Mammary epithelial cell (primary cell): ENCODE measurements at regions of chr10 and their contacts with region 1.

Region 1: DNA sequence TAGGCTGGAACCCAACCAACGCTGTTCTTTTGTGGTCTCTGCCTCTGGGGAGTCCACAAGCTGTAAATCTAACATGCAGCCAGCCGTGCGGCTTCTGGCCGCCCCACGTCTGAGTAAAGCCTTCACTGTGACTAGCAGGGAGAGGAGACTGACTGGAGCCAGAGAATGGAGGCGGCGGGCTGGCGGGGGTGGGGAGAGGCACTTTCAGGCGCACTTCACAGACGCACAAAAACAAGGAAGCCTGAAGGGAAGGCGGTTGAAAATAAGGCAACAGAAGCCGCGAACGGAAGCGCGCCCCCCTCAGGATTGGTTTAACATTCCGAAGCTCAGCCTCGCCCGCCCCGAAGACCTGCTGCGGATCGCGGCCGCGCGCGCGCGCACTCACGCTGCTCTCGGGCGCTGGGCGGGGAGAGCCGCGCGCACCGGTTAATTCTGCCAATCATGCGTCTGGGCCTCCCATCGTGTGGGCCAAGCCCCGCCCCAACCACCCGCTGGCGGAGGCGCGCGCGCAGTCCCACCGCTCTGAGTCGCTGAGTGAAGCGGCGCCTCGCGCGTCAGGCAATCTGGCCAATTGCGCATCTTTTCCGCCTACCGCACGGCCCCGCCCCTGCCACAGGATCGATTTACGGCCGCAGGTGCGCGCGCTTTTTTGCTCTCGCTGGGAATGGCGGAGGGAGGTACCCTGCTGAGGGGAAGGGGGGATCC is at the start of gene SFR1:
- DNase-seq: peak; percentile 99
- H3K4me3 ChIP-seq: peak within 1 kb of the TSS; percentile 73 to 78 (median 78)
- H3K27ac ChIP-seq: peak within 1 kb of the TSS; percentile 100
- H3K4me1 ChIP-seq: peaks cover 39% of the 10 kb centered on the region
- H3K27me3 ChIP-seq: no peaks in the 10 kb centered on the region
- CTCF ChIP-seq: peak; percentile 42 to 65
- total RNA-seq, gene SFR1: 5.8 to 16.4 TPM

Region 2: GRCh38 chr10:103966671-103967447 is 154.8 kb before region 1 on chr10 and contains the start of gene SLK:
- CTCF ChIA-PET with region 1: no interaction called
- dilution Hi-C with region 1: no loop called
- in situ Hi-C with region 1: no loop called
- intact Hi-C with region 1: loop called (anchors 5 kb)
- DNase-seq: peak; percentile 80
- H3K4me3 ChIP-seq: peak within 1 kb of the TSS; percentile 69 to 99 (median 97)
- H3K27ac ChIP-seq: peak within 1 kb of the TSS; percentile 72
- H3K4me1 ChIP-seq: peaks cover 13% of the 10 kb centered on the region
- H3K27me3 ChIP-seq: no peaks in the 10 kb centered on the region
- CTCF ChIP-seq: no peak
- total RNA-seq, gene SLK: 79.5 to 85.0 TPM

Region 3: DNA sequence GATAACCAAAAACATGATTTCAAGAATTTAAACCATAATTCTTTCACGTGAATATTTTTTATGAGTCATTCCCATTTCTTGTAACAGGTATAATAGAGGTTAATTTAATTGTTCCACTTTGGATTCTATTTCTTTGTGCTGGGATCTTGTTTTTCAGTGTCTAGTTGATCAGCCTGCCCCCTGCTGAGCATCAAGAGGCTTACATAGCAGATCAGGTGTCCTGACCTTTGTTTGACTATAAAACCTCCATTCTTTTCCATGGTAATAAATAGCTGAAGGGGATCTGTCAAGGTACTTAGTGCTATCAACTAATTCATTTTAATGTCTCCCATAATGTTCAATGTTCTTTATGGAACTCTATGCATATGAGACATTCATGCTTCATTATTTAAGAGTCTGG is 40.9 kb before region 1 on chr10:
- CTCF ChIA-PET with region 1: interaction called, 5 read pairs
- dilution Hi-C with region 1: loop called (anchors 5 kb)
- in situ Hi-C with region 1: loop called (anchors 5 kb)
- intact Hi-C with region 1: loop called (anchors 1 kb)
- DNase-seq: no peak
- H3K4me3 ChIP-seq: peak overlapping the region; percentile 68 to 99 (median 96)
- H3K27ac ChIP-seq: peak overlapping the region; percentile 100
- H3K4me1 ChIP-seq: peaks cover 21% of the 10 kb centered on the region
- H3K27me3 ChIP-seq: no peaks in the 10 kb centered on the region
- CTCF ChIP-seq: peak; percentile 67 to 69

Region 4: DNA sequence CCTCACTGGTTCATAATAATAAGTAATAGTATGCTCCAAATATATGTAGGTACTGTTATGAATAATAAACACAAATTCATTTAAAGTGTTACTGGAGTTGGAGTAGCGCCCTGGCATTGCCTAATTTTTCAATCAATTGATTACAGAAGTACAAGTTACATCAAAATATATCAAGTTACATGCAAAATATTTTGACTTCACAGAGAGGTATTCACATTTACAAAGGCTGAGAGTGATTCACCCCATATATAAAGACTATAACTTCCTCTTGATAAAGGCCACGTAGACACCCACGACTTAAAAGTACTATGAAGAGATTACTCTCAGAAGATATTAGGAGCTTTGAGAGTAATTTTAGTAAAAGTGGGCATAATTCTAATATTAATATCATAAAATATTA is 22.4 kb before region 1 on chr10:
- CTCF ChIA-PET with region 1: no interaction called
- dilution Hi-C with region 1: no loop called
- in situ Hi-C with region 1: no loop called
- intact Hi-C with region 1: loop called (anchors 1 kb)
- DNase-seq: no peak
- H3K4me3 ChIP-seq: no peak overlapping the region
- H3K27ac ChIP-seq: no peak overlapping the region
- H3K4me1 ChIP-seq: peaks cover 13% of the 10 kb centered on the region
- H3K27me3 ChIP-seq: no peaks in the 10 kb centered on the region
- CTCF ChIP-seq: no peak

Region 5: GRCh38 chr10:104254493-104255310 is 133.0 kb after region 1 on chr10 and contains the start of gene GSTO1:
- CTCF ChIA-PET with region 1: no interaction called
- dilution Hi-C with region 1: no loop called
- in situ Hi-C with region 1: no loop called
- intact Hi-C with region 1: loop called (anchors 5 kb)
- DNase-seq: peak; percentile 55
- H3K4me3 ChIP-seq: peak within 1 kb of the TSS; percentile 80 to 85 (median 81)
- H3K27ac ChIP-seq: peak within 1 kb of the TSS; percentile 82
- H3K4me1 ChIP-seq: peaks cover 35% of the 10 kb centered on the region
- H3K27me3 ChIP-seq: no peaks in the 10 kb centered on the region
- CTCF ChIP-seq: peak in 1 of 2 donors; percentile 17
- total RNA-seq, gene GSTO1: 203 to 205 TPM